A549 (cell line): ENCODE measurements at regions of chr3 and their contacts with region 1.

Region 1: GRCh38 chr3:14633819-14634424 is 17.6 kb upstream of the CCDC174 start:
- DNase-seq: peak; percentile 66 to 83
- ATAC-seq: peak; percentile 80 to 95; a peak in 5 of 6 replicates
- H3K4me3 ChIP-seq: no peak overlapping the region
- H3K27ac ChIP-seq: no peak overlapping the region
- H3K4me1 ChIP-seq: no peaks in the 10 kb centered on the region; the same call in 2 of the 3 replicates
- CTCF ChIP-seq: peak; percentile 61
- EP300 ChIP-seq: no peak
- POLR2A ChIP-seq: no peak
- RAD21 ChIP-seq: peak; percentile 36 to 54; a peak in 4 of 5 replicates

Region 2: GRCh38 chr3:14623569-14624051 is 10.3 kb before region 1 on chr3:
- CTCF ChIA-PET with region 1: interaction called, 10 read pairs
- POLR2A ChIA-PET with region 1: no interaction called
- DNase-seq: no peak
- ATAC-seq: no peak; a peak in 3 of 6 replicates
- H3K4me3 ChIP-seq: no peak overlapping the region
- H3K27ac ChIP-seq: no peak overlapping the region
- H3K4me1 ChIP-seq: 0 out of 3 replicates have a peak, but pooled peaks cover 3% of the 10 kb centered on the region
- CTCF ChIP-seq: no peak
- EP300 ChIP-seq: no peak
- POLR2A ChIP-seq: no peak
- RAD21 ChIP-seq: no peak